ENCODE measurements at regions of chr7 and their contacts with region 1.

Region 1: DNA sequence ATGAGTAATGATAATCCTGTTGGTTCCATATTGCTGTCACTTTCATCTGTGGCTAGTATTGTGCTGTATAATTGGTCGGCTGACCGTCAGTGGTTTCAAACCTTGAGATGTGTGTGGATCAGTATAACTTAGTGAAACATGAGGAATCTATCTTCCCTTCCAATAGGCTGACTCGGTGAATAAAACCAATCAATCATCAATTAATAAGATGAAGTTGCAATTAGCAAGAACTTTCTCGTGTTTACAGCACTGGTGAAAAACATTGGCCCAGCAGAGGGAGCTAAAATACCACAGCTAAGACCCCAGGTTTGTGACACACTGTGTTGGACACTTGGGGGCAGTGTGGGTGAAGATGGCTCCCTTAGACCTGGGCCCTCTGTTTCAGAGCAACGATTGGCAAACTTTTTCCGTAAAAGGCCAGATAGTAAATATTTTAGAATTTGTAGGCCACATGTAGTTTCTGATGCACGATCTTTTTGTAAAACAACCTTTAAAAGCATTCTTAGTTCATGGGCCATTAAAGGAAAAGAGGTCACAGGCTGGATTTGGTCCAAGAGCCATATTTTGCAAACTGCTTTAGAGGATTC is 47.8 kb downstream of the STRA8 start:
- DNase-seq: peak; percentile 85
- ATAC-seq: peak; percentile 100
- H3K4me3 ChIP-seq: no peak overlapping the region
- H3K4me3 Mint-ChIP-seq: no peak overlapping the region
- H3K27ac ChIP-seq: no peak overlapping the region
- H3K27ac Mint-ChIP-seq: no peak overlapping the region
- H3K4me1 ChIP-seq: peaks cover 4% of the 10 kb centered on the region in 2 donors
- H3K4me1 Mint-ChIP-seq: peaks cover 8% of the 10 kb centered on the region
- H3K27me3 ChIP-seq: peaks cover 0 to 4% (median 0%) of the 10 kb centered on the region in 4 experiments
- H3K27me3 Mint-ChIP-seq: peaks cover 13% of the 10 kb centered on the region
- CTCF ChIP-seq: peak; percentile 98

Region 2: GRCh38 chr7:134669845-134670373 is 611.5 kb before region 1 on chr7:
- CTCF ChIA-PET with region 1: no interaction called
- POLR2A ChIA-PET with region 1: no interaction called
- intact Hi-C with region 1: no loop called
- DNase-seq: peak; percentile 36
- ATAC-seq: peak; percentile 64
- H3K4me3 ChIP-seq: peak overlapping the region in 1 of 5 experiments; percentile 11
- H3K4me3 Mint-ChIP-seq: peak overlapping the region; percentile 44
- H3K27ac ChIP-seq: peak overlapping the region; percentile 14 to 57
- H3K27ac Mint-ChIP-seq: peak overlapping the region; percentile 6
- H3K4me1 ChIP-seq: peaks cover 13 to 18% of the 10 kb centered on the region in 2 donors
- H3K4me1 Mint-ChIP-seq: peaks cover 29% of the 10 kb centered on the region
- H3K27me3 ChIP-seq: no peaks in the 10 kb centered on the region
- H3K27me3 Mint-ChIP-seq: no peaks in the 10 kb centered on the region
- CTCF ChIP-seq: no peak

Region 3: DNA sequence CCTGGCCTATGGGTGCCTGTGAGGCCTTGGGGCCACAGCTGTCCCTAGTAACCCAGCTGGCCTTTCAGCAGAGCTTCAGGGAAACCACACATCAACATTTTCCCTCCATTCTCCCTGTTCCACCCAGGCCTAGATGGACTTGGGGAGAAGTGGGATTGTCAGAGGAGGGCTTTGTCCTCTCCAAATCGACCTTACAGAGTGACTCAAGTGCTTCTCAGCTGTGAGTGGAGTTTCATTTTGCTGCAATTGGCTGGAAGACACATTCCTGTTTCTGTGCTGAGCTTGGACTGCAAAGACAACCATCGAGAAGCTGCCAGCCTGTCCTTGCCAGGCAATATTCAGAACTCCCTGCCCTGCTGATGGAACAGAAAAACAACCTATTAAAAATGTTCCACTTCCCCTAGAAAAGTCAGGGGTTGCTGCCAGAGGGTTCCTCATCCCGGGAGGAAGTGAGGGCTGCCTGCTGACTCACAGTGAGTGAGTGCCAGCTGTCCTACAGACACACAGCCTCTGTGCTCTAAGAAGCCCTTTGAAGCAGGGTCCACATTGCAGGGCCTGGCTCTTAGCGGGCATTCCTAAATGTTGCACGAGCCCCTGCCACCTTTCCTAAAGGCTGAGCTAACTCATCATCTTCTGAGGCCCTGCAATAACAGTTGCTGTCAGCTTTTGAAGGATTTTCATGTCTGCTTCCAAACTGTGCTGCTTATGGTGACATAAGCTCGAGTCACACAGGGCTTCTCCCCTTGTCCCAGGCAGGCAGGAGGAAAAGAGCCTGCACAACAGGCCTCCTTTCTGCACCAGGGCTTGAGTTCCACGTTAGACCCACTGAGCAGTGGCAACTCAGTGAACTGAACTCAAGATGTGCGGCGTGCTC is 27.3 kb before region 1 on chr7:
- CTCF ChIA-PET with region 1: no interaction called
- POLR2A ChIA-PET with region 1: no interaction called
- intact Hi-C with region 1: no loop called
- DNase-seq: no peak
- ATAC-seq: no peak
- H3K4me3 ChIP-seq: no peak overlapping the region
- H3K4me3 Mint-ChIP-seq: no peak overlapping the region
- H3K27ac ChIP-seq: no peak overlapping the region
- H3K27ac Mint-ChIP-seq: no peak overlapping the region
- H3K4me1 ChIP-seq: no peaks in the 10 kb centered on the region
- H3K4me1 Mint-ChIP-seq: no peaks in the 10 kb centered on the region
- H3K27me3 ChIP-seq: peaks cover 0 to 2% (median 0%) of the 10 kb centered on the region in 4 experiments
- H3K27me3 Mint-ChIP-seq: no peaks in the 10 kb centered on the region
- CTCF ChIP-seq: no peak

Region 4: DNA sequence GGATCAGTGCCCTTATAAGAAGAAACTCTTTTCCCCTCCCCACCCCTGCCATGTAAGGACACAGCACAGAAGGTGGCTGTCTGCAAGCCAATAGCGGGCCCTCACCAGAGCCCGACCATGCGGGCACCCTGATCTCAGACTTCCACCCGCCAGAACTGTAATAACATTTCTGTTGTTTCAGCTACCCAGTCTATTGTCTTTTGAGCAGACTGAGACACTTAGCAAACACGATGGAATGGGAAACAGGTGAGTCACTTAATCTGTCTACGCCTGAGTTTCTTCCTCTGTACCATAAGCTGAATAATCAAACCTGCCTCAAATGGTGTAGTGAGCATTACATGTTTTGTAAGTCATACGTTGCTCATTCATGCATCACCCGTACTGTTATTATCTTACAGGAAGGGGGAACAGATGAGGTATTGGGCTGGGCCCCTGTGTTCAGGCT is 10.4 kb after region 1 on chr7:
- CTCF ChIA-PET with region 1: interaction called, 15 read pairs
- POLR2A ChIA-PET with region 1: no interaction called
- intact Hi-C with region 1: no loop called
- DNase-seq: no peak
- ATAC-seq: no peak
- H3K4me3 ChIP-seq: no peak overlapping the region
- H3K4me3 Mint-ChIP-seq: no peak overlapping the region
- H3K27ac ChIP-seq: no peak overlapping the region
- H3K27ac Mint-ChIP-seq: no peak overlapping the region
- H3K4me1 ChIP-seq: no peaks in the 10 kb centered on the region
- H3K4me1 Mint-ChIP-seq: no peaks in the 10 kb centered on the region
- H3K27me3 ChIP-seq: no peaks in the 10 kb centered on the region
- H3K27me3 Mint-ChIP-seq: peaks cover 10% of the 10 kb centered on the region
- CTCF ChIP-seq: no peak

Region 5: GRCh38 chr7:135335628-135336139 is 54.2 kb after region 1 on chr7:
- CTCF ChIA-PET with region 1: interaction called, 6 read pairs
- POLR2A ChIA-PET with region 1: no interaction called
- intact Hi-C with region 1: loop called (anchors 2 kb)
- DNase-seq: peak; percentile 23
- ATAC-seq: no peak
- H3K4me3 ChIP-seq: no peak overlapping the region
- H3K4me3 Mint-ChIP-seq: no peak overlapping the region
- H3K27ac ChIP-seq: no peak overlapping the region
- H3K27ac Mint-ChIP-seq: no peak overlapping the region
- H3K4me1 ChIP-seq: no peaks in the 10 kb centered on the region
- H3K4me1 Mint-ChIP-seq: no peaks in the 10 kb centered on the region
- H3K27me3 ChIP-seq: no peaks in the 10 kb centered on the region
- H3K27me3 Mint-ChIP-seq: peaks cover 3% of the 10 kb centered on the region
- CTCF ChIP-seq: no peak

Measured in B cell (primary cell).